IMR-90 (cell line): ENCODE measurements at regions of chr19 and their contacts with region 1.

Region 1: DNA sequence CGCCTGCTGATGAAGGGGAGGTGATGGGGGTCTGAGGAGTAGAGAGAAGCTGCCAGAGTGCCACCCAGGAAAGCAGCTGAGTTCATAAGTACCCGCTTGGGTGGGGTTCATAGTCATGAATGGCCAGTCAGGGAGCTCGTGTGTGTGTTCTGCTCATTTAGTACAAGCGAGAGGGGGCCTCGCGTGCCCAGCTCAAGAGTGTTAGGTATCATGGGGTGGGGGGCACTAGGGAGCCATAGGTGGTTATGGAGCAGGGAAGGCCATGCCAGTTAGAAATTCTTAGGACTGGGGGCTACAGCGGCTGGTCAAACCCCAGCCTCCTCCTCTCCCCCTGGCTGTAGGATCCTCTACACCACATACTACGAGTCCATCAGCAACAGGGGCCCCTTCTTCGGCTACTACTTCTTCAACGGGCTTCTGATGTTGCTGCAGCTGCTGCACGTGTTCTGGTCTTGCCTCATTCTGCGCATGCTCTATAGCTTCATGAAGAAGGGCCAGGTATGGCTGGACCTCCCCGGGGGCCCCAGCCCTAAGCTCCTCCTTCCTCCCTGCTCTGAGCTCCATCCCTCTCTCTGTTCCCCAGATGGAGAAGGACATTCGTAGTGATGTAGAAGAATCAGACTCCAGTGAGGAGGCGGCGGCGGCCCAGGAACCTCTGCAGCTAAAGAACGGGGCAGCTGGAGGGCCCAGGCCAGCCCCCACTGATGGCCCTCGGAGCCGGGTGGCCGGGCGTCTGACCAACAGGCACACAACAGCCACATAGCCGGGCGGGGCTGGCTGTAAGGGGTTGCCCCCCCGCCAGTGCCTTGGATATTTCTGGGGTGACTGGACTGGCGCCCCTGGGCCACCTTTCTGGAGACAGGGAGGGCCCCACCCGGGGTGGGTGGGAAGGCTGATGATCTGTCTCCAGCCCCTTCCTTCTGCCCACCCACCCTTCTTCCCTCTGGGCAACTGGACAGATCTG is 46.5 kb downstream of the CD320 start:
- DNase-seq: no peak
- ATAC-seq: no peak
- H3K4me3 ChIP-seq: no peak overlapping the region
- H3K27ac ChIP-seq: no peak overlapping the region
- H3K4me1 ChIP-seq: no peaks in the 10 kb centered on the region
- H3K27me3 ChIP-seq: no peaks in the 10 kb centered on the region
- CTCF ChIP-seq: no peak
- POLR2A ChIP-seq: no peak
- RAD21 ChIP-seq: no peak

Region 2: DNA sequence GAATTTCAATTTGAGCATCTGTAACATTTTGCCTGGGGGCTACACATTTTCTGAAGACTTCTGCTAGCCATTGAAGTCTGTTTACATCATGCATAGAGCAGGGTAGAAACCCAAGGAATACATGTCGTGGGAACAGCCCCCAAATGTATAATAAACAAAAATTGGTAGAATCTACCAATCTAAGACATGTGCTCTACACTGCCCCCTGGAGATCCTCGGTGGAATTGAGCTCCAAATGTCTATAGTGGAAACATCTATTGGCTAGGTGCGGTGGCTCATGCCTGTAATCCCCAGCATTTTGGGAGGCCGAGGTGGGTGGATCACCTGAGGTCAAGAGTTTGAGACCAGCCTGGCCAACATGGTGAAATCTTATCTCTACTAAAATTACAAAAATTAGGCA is 1297.7 kb before region 1 on chr19:
- CTCF ChIA-PET with region 1: no interaction called
- POLR2A ChIA-PET with region 1: no interaction called
- dilution Hi-C with region 1: no loop called
- in situ Hi-C with region 1: no loop called
- intact Hi-C with region 1: no loop called
- DNase-seq: no peak
- ATAC-seq: no peak
- H3K4me3 ChIP-seq: no peak overlapping the region
- H3K27ac ChIP-seq: no peak overlapping the region
- H3K4me1 ChIP-seq: no peaks in the 10 kb centered on the region
- H3K27me3 ChIP-seq: no peaks in the 10 kb centered on the region
- CTCF ChIP-seq: no peak
- POLR2A ChIP-seq: no peak
- RAD21 ChIP-seq: no peak

Region 3: GRCh38 chr19:8017808-8018207 is 243.8 kb before region 1 on chr19:
- CTCF ChIA-PET with region 1: no interaction called
- POLR2A ChIA-PET with region 1: interaction called, 31 read pairs
- dilution Hi-C with region 1: no loop called
- in situ Hi-C with region 1: no loop called
- intact Hi-C with region 1: no loop called
- DNase-seq: no peak
- ATAC-seq: no peak
- H3K4me3 ChIP-seq: no peak overlapping the region
- H3K27ac ChIP-seq: no peak overlapping the region
- H3K4me1 ChIP-seq: no peaks in the 10 kb centered on the region
- H3K27me3 ChIP-seq: no peaks in the 10 kb centered on the region
- CTCF ChIP-seq: no peak
- POLR2A ChIP-seq: no peak
- RAD21 ChIP-seq: no peak

Region 4: GRCh38 chr19:8484331-8484894 is 222.8 kb after region 1 on chr19:
- CTCF ChIA-PET with region 1: no interaction called
- POLR2A ChIA-PET with region 1: no interaction called
- dilution Hi-C with region 1: no loop called
- in situ Hi-C with region 1: no loop called
- intact Hi-C with region 1: no loop called
- DNase-seq: no peak
- ATAC-seq: no peak
- H3K4me3 ChIP-seq: no peak overlapping the region
- H3K27ac ChIP-seq: no peak overlapping the region
- H3K4me1 ChIP-seq: no peaks in the 10 kb centered on the region
- H3K27me3 ChIP-seq: no peaks in the 10 kb centered on the region
- CTCF ChIP-seq: no peak
- POLR2A ChIP-seq: no peak
- RAD21 ChIP-seq: no peak